Calu3 (cell line): ENCODE measurements at regions of chr6 and their contacts with region 1.

Region 1: DNA sequence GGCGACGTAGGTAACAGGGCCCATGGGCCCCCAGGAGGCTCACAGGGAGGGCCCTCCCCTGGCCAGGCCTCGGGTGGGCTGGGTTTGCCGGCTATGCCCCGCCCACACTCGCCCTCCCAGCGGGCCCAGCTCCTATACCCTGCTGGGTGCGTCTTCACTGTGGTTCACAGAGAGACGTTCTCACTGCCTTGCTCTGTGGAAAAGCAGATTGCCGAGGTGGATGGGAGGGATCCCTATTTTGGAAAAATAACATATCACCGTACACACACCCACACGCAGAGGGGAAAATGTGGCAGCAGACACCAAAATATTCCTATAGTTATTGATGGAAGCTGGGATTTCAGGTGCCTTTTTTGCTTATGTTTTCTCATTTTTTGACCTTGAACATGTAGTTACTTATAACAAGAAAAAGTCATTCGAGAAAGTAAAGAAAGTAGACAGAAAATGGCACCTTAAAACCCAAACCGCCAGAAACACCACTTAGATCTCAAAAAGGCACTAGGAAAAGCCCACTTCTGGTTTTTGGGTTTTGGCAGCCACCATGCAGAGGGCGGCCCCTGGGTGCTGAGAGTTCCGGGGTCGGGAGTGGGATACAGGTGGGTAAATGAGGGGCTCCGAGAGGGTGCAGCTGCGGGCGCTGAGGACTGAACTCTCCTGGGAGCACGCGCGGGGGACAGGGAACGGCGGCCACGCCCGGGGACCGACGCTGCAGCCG is 49.4 kb downstream of the TMEM242 start:
- DNase-seq: peak; percentile 8
- H3K4me3 Mint-ChIP-seq: peak overlapping the region; percentile 83
- H3K27ac Mint-ChIP-seq: no peak overlapping the region
- H3K4me1 Mint-ChIP-seq: no peaks in the 10 kb centered on the region
- H3K27me3 Mint-ChIP-seq: no peaks in the 10 kb centered on the region
- CTCF ChIP-seq: no peak

Region 2: GRCh38 chr6:157227202-157228166 is 46.4 kb before region 1 on chr6:
- CTCF ChIA-PET with region 1: interaction called, 3 read pairs
- intact Hi-C with region 1: loop called (anchors 2 kb)
- DNase-seq: peak; percentile 22
- H3K4me3 Mint-ChIP-seq: no peak overlapping the region
- H3K27ac Mint-ChIP-seq: no peak overlapping the region
- H3K4me1 Mint-ChIP-seq: peaks cover 3% of the 10 kb centered on the region
- H3K27me3 Mint-ChIP-seq: no peaks in the 10 kb centered on the region
- CTCF ChIP-seq: peak; percentile 21

Region 3: GRCh38 chr6:157248264-157248663 is 25.6 kb before region 1 on chr6:
- CTCF ChIA-PET with region 1: no interaction called
- intact Hi-C with region 1: no loop called
- DNase-seq: no peak
- H3K4me3 Mint-ChIP-seq: no peak overlapping the region
- H3K27ac Mint-ChIP-seq: no peak overlapping the region
- H3K4me1 Mint-ChIP-seq: peaks cover under 1% of the 10 kb centered on the region
- H3K27me3 Mint-ChIP-seq: no peaks in the 10 kb centered on the region
- CTCF ChIP-seq: no peak

Region 4: GRCh38 chr6:157335829-157336228 is 61.9 kb after region 1 on chr6:
- CTCF ChIA-PET with region 1: no interaction called
- intact Hi-C with region 1: no loop called
- DNase-seq: no peak
- H3K4me3 Mint-ChIP-seq: no peak overlapping the region
- H3K27ac Mint-ChIP-seq: no peak overlapping the region
- H3K4me1 Mint-ChIP-seq: no peaks in the 10 kb centered on the region
- H3K27me3 Mint-ChIP-seq: no peaks in the 10 kb centered on the region
- CTCF ChIP-seq: no peak